H1 (cell line): ENCODE measurements at regions of chr12 and their contacts with region 1.

Region 1: GRCh38 chr12:130747867-130748740 is 32.0 kb upstream of the RIMBP2 start:
- DNase-seq: peak; percentile 49 to 98
- H3K4me3 ChIP-seq: no peak overlapping the region
- H3K27ac ChIP-seq: no peak overlapping the region
- H3K4me1 ChIP-seq: no peaks in the 10 kb centered on the region; a peak in 1 of 7 replicates
- H3K27me3 ChIP-seq: no peaks in the 10 kb centered on the region
- CTCF ChIP-seq: peak; percentile 88 to 91 (median 90)
- EP300 ChIP-seq: no peak
- POLR2A ChIP-seq: no peak
- RAD21 ChIP-seq: peak; percentile 95 to 98

Region 2: GRCh38 chr12:130401703-130402102 is 346.4 kb before region 1 on chr12:
- CTCF ChIA-PET with region 1: interaction called, 15 read pairs
- POLR2A ChIA-PET with region 1: interaction called, 4 read pairs
- DNase-seq: no peak
- H3K4me3 ChIP-seq: no peak overlapping the region
- H3K27ac ChIP-seq: no peak overlapping the region
- H3K4me1 ChIP-seq: no peaks in the 10 kb centered on the region
- H3K27me3 ChIP-seq: no peaks in the 10 kb centered on the region
- CTCF ChIP-seq: peak in 2 of 3 experiments; percentile 52 to 62; a peak in 3 of 4 replicates
- EP300 ChIP-seq: no peak
- POLR2A ChIP-seq: no peak
- RAD21 ChIP-seq: peak; percentile 86 to 89

Region 3: DNA sequence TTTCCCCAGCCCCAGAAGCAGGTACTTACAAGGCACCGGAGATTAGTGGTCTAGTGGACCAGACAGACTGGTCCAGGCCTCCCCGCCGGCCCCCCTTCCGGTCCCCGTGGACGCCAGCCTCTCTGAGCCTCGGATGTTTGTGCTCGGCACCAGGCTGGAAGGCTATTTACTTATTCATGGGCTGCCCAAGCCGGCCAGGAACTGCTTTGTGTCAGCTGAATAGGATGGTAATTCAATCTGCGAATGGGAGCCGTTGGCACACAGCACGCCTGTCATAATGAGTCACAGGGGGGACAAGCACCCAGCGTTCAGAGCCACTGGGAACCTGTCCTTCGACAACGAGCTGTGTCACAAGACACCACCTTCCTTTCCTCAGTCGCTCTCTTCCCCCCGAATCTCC is 114.3 kb before region 1 on chr12:
- CTCF ChIA-PET with region 1: interaction called, 11 read pairs
- POLR2A ChIA-PET with region 1: interaction called, 5 read pairs
- DNase-seq: peak; percentile 61 to 73
- H3K4me3 ChIP-seq: peak overlapping the region in 3 of 4 experiments; percentile 4 to 42 (median 19); a peak in 5 of 8 replicates
- H3K27ac ChIP-seq: no peak overlapping the region
- H3K4me1 ChIP-seq: peaks cover 2 to 13% (median 6%) of the 10 kb centered on the region in 4 experiments
- H3K27me3 ChIP-seq: peaks cover 0 to 7% (median 3%) of the 10 kb centered on the region in 4 experiments; a peak in 3 of 7 replicates
- CTCF ChIP-seq: no peak
- EP300 ChIP-seq: no peak
- POLR2A ChIP-seq: no peak
- RAD21 ChIP-seq: no peak

Region 4: DNA sequence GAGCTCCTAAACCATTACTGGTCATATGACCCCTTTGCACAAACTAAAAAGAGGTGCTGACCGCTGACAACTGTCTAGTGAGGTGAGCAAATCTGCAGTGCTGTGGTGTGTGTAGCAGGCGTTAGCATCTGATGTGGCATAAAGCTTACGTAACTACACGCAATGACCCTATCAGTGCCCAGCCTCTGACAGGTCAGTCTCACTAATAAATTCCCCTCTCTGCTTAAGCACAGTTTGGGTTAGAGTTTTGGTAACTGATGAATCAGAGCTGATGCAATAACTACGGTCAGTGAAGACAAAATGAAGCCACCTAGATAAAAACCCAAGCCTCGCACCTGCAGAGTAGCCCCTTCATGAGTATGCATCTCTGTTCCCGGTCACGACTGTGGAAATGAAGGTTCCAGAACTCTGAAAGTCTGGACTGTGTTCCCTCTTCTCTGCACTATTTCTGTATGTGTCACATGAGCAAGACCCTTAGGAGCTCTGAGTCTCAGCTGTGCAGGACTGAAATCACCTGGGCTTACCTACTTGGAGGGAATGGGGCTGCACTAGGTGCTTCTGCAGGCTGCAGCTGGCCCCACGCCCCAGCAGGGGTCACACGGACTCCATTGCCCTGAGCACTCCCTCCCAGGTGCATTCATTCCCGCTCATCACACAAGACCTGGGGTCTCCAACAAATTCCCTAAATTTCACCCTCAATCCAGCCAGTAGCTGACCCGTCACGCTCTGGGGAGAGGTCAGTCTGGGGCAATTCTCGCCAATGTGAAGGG is 86.4 kb before region 1 on chr12:
- CTCF ChIA-PET with region 1: interaction called, 21 read pairs
- POLR2A ChIA-PET with region 1: no interaction called
- DNase-seq: no peak
- H3K4me3 ChIP-seq: no peak overlapping the region
- H3K27ac ChIP-seq: no peak overlapping the region
- H3K4me1 ChIP-seq: no peaks in the 10 kb centered on the region; a peak in 1 of 7 replicates
- H3K27me3 ChIP-seq: no peaks in the 10 kb centered on the region; a peak in 1 of 7 replicates
- CTCF ChIP-seq: peak in 2 of 3 experiments; percentile 26 to 31; a peak in 3 of 4 replicates
- EP300 ChIP-seq: no peak
- POLR2A ChIP-seq: no peak
- RAD21 ChIP-seq: peak; percentile 42 to 51; a peak in 3 of 4 replicates

Region 5: GRCh38 chr12:130709971-130710732 is 38.0 kb before region 1 on chr12:
- CTCF ChIA-PET with region 1: interaction called, 22 read pairs
- POLR2A ChIA-PET with region 1: no interaction called
- DNase-seq: peak in 1 of 2 experiments; percentile 38
- H3K4me3 ChIP-seq: no peak overlapping the region
- H3K27ac ChIP-seq: no peak overlapping the region
- H3K4me1 ChIP-seq: peaks cover 0 to 21% (median 13%) of the 10 kb centered on the region in 4 experiments; a peak in 5 of 7 replicates
- H3K27me3 ChIP-seq: peaks cover 22 to 31% (median 29%) of the 10 kb centered on the region in 4 experiments
- CTCF ChIP-seq: no peak
- EP300 ChIP-seq: no peak
- POLR2A ChIP-seq: no peak
- RAD21 ChIP-seq: no peak

Region 6: DNA sequence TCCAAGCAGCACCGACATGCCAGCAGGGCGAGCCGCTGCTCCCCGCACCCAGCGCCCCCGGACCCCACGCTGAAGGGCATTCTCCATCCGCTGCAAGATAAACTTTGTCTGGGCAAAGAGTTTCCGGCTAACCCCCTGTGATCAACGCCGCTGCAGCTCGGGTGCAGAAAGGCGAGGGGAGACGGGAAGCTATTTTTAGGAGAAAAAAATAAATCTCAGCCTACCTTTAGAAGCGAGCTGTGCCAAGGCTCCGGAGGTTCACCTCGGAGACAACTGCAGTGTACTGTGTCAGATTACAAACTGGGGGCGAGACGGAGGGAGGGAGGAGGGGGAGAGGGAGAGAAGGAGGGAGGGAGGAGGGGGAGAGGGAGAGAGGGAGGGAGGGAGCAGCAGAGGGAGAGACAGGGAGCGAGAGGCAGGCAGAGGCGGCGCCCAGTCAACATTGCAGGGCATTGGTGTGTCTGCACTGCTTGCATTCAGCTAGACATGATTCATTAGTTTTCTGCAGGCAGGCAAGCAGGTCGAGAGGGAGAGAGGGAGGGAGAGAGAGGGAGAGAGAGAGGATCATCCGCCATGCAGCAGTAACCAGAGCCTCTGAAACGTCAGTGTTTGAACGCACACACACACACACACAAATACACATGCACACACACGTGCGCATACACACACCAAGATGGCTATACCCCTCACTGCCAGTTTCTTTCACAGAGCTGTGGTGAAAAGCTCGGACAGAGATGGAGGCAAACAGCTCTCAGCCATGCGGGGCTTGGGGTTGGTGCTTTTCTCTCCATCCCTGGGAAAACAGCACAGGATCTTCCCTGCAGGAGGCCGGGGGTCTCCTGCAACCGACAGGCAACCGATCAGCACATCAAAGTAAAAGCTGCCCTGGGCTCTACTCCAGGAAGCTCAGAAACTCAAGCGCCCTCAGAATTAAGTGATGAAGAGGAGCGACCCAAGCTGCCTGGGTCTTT is 31.8 kb before region 1 on chr12 and contains the start of gene RIMBP2:
- CTCF ChIA-PET with region 1: interaction called, 22 read pairs
- POLR2A ChIA-PET with region 1: no interaction called
- DNase-seq: peak in 1 of 2 experiments; percentile 61
- H3K4me3 ChIP-seq: peak within 1 kb of the TSS; percentile 67 to 71 (median 67)
- H3K27ac ChIP-seq: no peak within 1 kb of the TSS
- H3K4me1 ChIP-seq: peaks cover 4 to 18% (median 11%) of the 10 kb centered on the region in 4 experiments
- H3K27me3 ChIP-seq: peaks cover 37 to 66% (median 59%) of the 10 kb centered on the region in 4 experiments
- CTCF ChIP-seq: no peak
- EP300 ChIP-seq: no peak
- POLR2A ChIP-seq: no peak
- RAD21 ChIP-seq: no peak
- total RNA-seq, gene RIMBP2: 0.31 and 0.65 TPM in 2 replicates

Region 7: GRCh38 chr12:130737731-130738130 is 10.4 kb before region 1 on chr12:
- CTCF ChIA-PET with region 1: interaction called, 10 read pairs
- POLR2A ChIA-PET with region 1: no interaction called
- DNase-seq: no peak
- H3K4me3 ChIP-seq: no peak overlapping the region
- H3K27ac ChIP-seq: no peak overlapping the region
- H3K4me1 ChIP-seq: no peaks in the 10 kb centered on the region
- H3K27me3 ChIP-seq: no peaks in the 10 kb centered on the region
- CTCF ChIP-seq: no peak
- EP300 ChIP-seq: no peak
- POLR2A ChIP-seq: no peak
- RAD21 ChIP-seq: no peak

Region 8: DNA sequence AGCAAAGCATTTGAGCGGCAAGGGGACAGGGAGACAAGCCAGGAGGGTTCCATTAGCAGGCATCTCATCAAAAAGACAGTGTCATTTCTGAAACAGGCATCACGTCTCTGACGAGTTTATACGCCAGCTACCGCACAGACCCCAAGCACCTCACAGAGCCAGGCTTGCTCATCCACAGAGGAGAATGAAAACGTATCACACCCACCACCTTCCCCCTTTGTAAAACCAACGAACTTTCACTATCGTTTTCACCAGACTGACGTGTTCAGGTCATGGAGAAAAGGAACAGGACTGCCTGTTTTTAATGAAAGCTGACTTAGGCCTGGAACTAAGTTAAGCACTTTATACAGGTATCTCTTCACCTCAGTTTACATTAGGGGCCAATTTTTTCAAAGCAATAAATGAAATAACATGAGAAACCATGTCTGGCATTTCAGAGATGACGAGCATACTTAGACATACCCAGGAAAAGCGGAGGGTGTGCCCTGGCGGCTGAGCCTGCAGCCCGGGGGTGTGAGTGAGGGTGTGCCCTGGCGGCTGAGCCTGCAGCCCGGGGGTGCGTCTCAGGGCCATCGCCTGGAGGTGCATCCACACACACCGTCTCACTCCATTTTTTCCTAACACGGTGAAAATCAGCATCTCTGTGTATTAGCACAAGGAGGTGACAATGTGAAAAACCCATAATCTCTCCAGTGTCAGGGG is 49.0 kb after region 1 on chr12:
- CTCF ChIA-PET with region 1: no interaction called
- POLR2A ChIA-PET with region 1: no interaction called
- DNase-seq: no peak
- H3K4me3 ChIP-seq: no peak overlapping the region
- H3K27ac ChIP-seq: no peak overlapping the region
- H3K4me1 ChIP-seq: peaks cover 0 to 2% (median under 1%) of the 10 kb centered on the region in 4 experiments; a peak in 2 of 7 replicates
- H3K27me3 ChIP-seq: no peaks in the 10 kb centered on the region
- CTCF ChIP-seq: no peak
- EP300 ChIP-seq: no peak
- POLR2A ChIP-seq: no peak
- RAD21 ChIP-seq: no peak